Caco-2 (cell line): ENCODE measurements at regions of chr13 and their contacts with region 1.

Region 1: GRCh38 chr13:102460801-102461200 is 59.0 kb upstream of the FGF14 start:
- DNase-seq: no peak
- H3K4me3 ChIP-seq: no peak overlapping the region
- H3K4me3 Mint-ChIP-seq: no peak overlapping the region
- H3K27ac Mint-ChIP-seq: no peak overlapping the region
- H3K4me1 ChIP-seq: no peaks in the 10 kb centered on the region
- H3K4me1 Mint-ChIP-seq: no peaks in the 10 kb centered on the region
- H3K27me3 ChIP-seq: no peaks in the 10 kb centered on the region
- H3K27me3 Mint-ChIP-seq: peaks cover 3% of the 10 kb centered on the region
- CTCF ChIP-seq: no peak

Region 2: GRCh38 chr13:101942038-101942437 is 518.8 kb before region 1 on chr13:
- CTCF ChIA-PET with region 1: no interaction called
- POLR2A ChIA-PET with region 1: no interaction called
- intact Hi-C with region 1: loop called (anchors 1 kb)
- DNase-seq: peak in 1 of 2 experiments; percentile 39
- H3K4me3 ChIP-seq: no peak overlapping the region
- H3K4me3 Mint-ChIP-seq: no peak overlapping the region
- H3K27ac Mint-ChIP-seq: no peak overlapping the region
- H3K4me1 ChIP-seq: no peaks in the 10 kb centered on the region
- H3K4me1 Mint-ChIP-seq: no peaks in the 10 kb centered on the region
- H3K27me3 ChIP-seq: no peaks in the 10 kb centered on the region
- H3K27me3 Mint-ChIP-seq: peaks cover 3% of the 10 kb centered on the region
- CTCF ChIP-seq: peak; percentile 30 to 78

Region 3: GRCh38 chr13:102091231-102091630 is 369.6 kb before region 1 on chr13:
- CTCF ChIA-PET with region 1: no interaction called
- POLR2A ChIA-PET with region 1: no interaction called
- intact Hi-C with region 1: loop called (anchors 2 kb)
- DNase-seq: peak; percentile 50 to 51
- H3K4me3 ChIP-seq: no peak overlapping the region
- H3K4me3 Mint-ChIP-seq: no peak overlapping the region
- H3K27ac Mint-ChIP-seq: no peak overlapping the region
- H3K4me1 ChIP-seq: no peaks in the 10 kb centered on the region
- H3K4me1 Mint-ChIP-seq: no peaks in the 10 kb centered on the region
- H3K27me3 ChIP-seq: no peaks in the 10 kb centered on the region; the same call in 1 of the 2 replicates
- H3K27me3 Mint-ChIP-seq: peaks cover 12% of the 10 kb centered on the region
- CTCF ChIP-seq: peak; percentile 28 to 41

Region 4: GRCh38 chr13:102141625-102142472 is 319.0 kb before region 1 on chr13:
- CTCF ChIA-PET with region 1: interaction called, 3 read pairs
- POLR2A ChIA-PET with region 1: no interaction called
- intact Hi-C with region 1: loop called (anchors 1 kb)
- DNase-seq: peak in 1 of 2 experiments; percentile 5
- H3K4me3 ChIP-seq: no peak overlapping the region
- H3K4me3 Mint-ChIP-seq: no peak overlapping the region
- H3K27ac Mint-ChIP-seq: no peak overlapping the region
- H3K4me1 ChIP-seq: no peaks in the 10 kb centered on the region
- H3K4me1 Mint-ChIP-seq: no peaks in the 10 kb centered on the region
- H3K27me3 ChIP-seq: no peaks in the 10 kb centered on the region
- H3K27me3 Mint-ChIP-seq: peaks cover 2% of the 10 kb centered on the region
- CTCF ChIP-seq: peak; percentile 69 to 80

Region 5: GRCh38 chr13:102197193-102197592 is 263.6 kb before region 1 on chr13:
- CTCF ChIA-PET with region 1: interaction called, 6 read pairs
- POLR2A ChIA-PET with region 1: no interaction called
- intact Hi-C with region 1: loop called (anchors 1 kb)
- DNase-seq: peak in 1 of 2 experiments; percentile 34
- H3K4me3 ChIP-seq: no peak overlapping the region
- H3K4me3 Mint-ChIP-seq: no peak overlapping the region
- H3K27ac Mint-ChIP-seq: no peak overlapping the region
- H3K4me1 ChIP-seq: no peaks in the 10 kb centered on the region
- H3K4me1 Mint-ChIP-seq: no peaks in the 10 kb centered on the region
- H3K27me3 ChIP-seq: no peaks in the 10 kb centered on the region
- H3K27me3 Mint-ChIP-seq: peaks cover 5% of the 10 kb centered on the region
- CTCF ChIP-seq: peak in 1 of 2 experiments; percentile 27

Region 6: GRCh38 chr13:102555917-102556553 is 95.2 kb after region 1 on chr13:
- CTCF ChIA-PET with region 1: interaction called, 4 read pairs
- POLR2A ChIA-PET with region 1: no interaction called
- intact Hi-C with region 1: loop called (anchors 2 kb)
- DNase-seq: peak in 1 of 2 experiments; percentile 42
- H3K4me3 ChIP-seq: no peak overlapping the region
- H3K4me3 Mint-ChIP-seq: no peak overlapping the region
- H3K27ac Mint-ChIP-seq: no peak overlapping the region
- H3K4me1 ChIP-seq: no peaks in the 10 kb centered on the region
- H3K4me1 Mint-ChIP-seq: peaks cover 6% of the 10 kb centered on the region
- H3K27me3 ChIP-seq: no peaks in the 10 kb centered on the region
- H3K27me3 Mint-ChIP-seq: peaks cover 6% of the 10 kb centered on the region
- CTCF ChIP-seq: peak; percentile 53 to 56

Region 7: GRCh38 chr13:102628559-102628958 is 167.8 kb after region 1 on chr13:
- CTCF ChIA-PET with region 1: no interaction called
- POLR2A ChIA-PET with region 1: no interaction called
- intact Hi-C with region 1: no loop called
- DNase-seq: no peak
- H3K4me3 ChIP-seq: no peak overlapping the region
- H3K4me3 Mint-ChIP-seq: no peak overlapping the region
- H3K27ac Mint-ChIP-seq: no peak overlapping the region
- H3K4me1 ChIP-seq: no peaks in the 10 kb centered on the region
- H3K4me1 Mint-ChIP-seq: no peaks in the 10 kb centered on the region
- H3K27me3 ChIP-seq: no peaks in the 10 kb centered on the region
- H3K27me3 Mint-ChIP-seq: no peaks in the 10 kb centered on the region
- CTCF ChIP-seq: no peak

Region 8: GRCh38 chr13:102845630-102846260 is 384.9 kb after region 1 on chr13 and contains the start of gene ERCC5:
- CTCF ChIA-PET with region 1: no interaction called
- POLR2A ChIA-PET with region 1: no interaction called
- intact Hi-C with region 1: loop called (anchors 5 kb)
- DNase-seq: peak; percentile 95 to 97
- H3K4me3 ChIP-seq: peak within 1 kb of the TSS; percentile 70
- H3K4me3 Mint-ChIP-seq: peak within 1 kb of the TSS; percentile 77
- H3K27ac Mint-ChIP-seq: peak within 1 kb of the TSS; percentile 92
- H3K4me1 ChIP-seq: no peaks in the 10 kb centered on the region
- H3K4me1 Mint-ChIP-seq: no peaks in the 10 kb centered on the region
- H3K27me3 ChIP-seq: no peaks in the 10 kb centered on the region
- H3K27me3 Mint-ChIP-seq: no peaks in the 10 kb centered on the region
- CTCF ChIP-seq: peak in 1 of 2 experiments; percentile 15
- total RNA-seq, gene ERCC5: 29.9 and 31.4 TPM in 2 replicates